Left ventricle myocardium inferior (tissue), 1 donor: ENCODE measurements at regions of chr15 and their contacts with region 1.

Region 1: GRCh38 chr15:33968224-33968623 is at the start of gene CHRM5:
- DNase-seq: no peak
- H3K4me3 ChIP-seq: no peak within 1 kb of the TSS
- H3K27ac ChIP-seq: no peak within 1 kb of the TSS
- H3K4me1 ChIP-seq: peaks cover 3% of the 10 kb centered on the region
- H3K27me3 ChIP-seq: no peaks in the 10 kb centered on the region
- CTCF ChIP-seq: no peak
- total RNA-seq, gene CHRM5: not detected

Region 2: DNA sequence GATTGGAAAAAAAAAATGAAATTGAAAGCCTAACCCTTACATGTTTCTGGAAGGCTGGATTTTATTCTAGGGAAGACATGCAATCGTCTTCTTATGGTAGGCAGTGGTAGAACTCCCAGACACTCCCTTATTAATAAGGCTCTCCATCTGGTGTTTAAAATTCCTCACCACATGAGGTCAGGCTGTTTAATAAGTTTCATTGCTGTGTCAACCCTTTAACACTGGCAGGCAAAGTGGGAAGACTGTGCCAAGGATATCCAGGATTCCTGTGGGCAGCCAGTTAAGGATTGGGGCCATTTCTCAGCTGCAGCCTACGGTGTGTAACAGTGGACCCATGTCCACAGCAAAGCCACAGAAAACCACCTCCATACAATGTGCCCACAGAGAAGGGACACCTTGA is 225.4 kb before region 1 on chr15:
- intact Hi-C with region 1: loop called (anchors 5 kb)
- DNase-seq: no peak
- H3K4me3 ChIP-seq: no peak overlapping the region
- H3K27ac ChIP-seq: no peak overlapping the region
- H3K4me1 ChIP-seq: no peaks in the 10 kb centered on the region
- H3K27me3 ChIP-seq: peaks cover 31% of the 10 kb centered on the region
- CTCF ChIP-seq: no peak